ENCODE measurements at regions of chr17 and their contacts with region 1.

Region 1: DNA sequence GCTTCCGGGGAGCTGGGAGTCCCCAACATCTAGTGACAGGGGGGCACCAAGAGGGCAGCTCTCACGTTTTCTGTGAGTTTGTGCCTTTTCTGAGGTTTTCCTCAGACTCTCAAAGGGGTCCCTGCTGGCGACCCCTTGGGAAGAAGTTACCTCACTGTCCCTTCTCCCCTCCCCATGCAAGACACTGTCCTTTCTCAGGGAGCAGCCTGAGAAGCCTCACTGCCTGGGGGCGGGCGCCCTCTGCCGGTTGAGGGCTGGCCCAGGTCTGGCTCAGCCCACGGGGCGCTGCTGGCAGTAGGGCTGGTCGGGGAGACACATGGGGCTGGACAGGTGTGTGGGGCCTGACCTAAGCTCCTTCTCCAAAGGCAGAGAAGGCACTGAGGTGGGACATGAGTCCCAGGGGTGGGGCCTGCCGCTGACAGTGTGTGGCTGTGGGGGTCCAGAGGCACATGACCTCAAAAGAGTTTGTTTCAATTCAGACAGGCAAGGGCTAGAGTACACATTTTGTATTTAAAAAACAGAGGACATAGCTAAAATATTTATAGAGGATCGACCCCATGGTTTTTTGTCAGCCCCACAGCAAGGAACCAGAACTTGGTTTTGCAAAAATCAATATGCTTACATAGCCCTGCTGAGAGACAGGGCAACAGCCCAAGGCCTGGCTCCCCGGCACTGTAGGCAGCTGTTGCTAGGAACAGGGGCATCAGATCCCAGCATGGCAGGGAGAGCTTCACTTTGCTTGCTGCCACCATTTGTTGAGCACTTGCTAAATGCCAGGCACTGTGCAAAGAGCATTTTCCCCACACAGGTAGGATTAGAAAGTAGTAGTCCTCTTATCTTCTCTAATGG is 18.5 kb upstream of the ALDH3A1 start:
- DNase-seq: peak; percentile 87
- CTCF ChIP-seq: peak; percentile 99

Region 2: DNA sequence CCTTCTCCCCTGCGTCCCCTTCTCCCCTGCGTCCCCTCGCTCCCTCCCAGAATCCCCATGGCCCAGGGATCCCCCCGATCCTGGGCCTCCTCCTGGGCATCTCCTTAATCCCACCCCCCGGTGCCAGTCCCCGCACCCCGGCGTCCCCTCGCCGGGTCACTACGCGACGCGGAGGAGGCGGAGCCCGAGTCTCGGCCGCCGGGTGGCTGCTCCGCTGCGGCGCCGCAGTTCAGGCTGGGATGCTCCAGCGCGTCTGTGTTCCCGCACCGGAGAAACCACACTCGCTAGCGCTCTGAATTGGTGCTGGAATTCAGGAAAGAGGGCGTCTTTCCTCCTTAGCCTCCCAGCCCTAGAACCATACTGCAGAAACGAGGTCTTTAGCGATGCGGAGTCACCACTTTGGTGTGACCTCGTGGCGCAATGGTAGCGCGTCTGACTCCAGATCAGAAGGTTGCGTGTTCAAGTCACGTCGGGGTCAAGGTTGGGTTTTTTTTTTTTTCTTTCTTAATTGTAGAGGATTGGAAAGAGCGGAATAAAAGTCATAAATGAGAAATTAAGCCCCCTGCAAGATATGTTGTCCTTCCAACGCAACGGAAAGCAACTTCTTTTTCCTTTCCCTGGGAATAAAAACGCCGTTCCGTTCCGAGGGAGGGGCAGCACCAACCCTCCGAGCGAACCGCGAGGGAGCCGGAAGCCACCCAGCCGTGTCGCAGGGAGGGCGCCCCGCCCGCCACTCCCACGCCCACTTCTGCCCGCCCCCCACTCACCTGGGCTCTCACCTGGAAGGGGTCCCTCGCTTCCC is 258.7 kb before region 1 on chr17:
- CTCF ChIA-PET with region 1: interaction called, 77 read pairs
- POLR2A ChIA-PET with region 1: no interaction called
- DNase-seq: peak; percentile 85
- CTCF ChIP-seq: no peak

Region 3: GRCh38 chr17:19648475-19649406 is 117.9 kb before region 1 on chr17 and contains the start of gene ALDH3A2:
- CTCF ChIA-PET with region 1: interaction called, 23 read pairs
- POLR2A ChIA-PET with region 1: interaction called, 5 read pairs
- DNase-seq: peak; percentile 99
- CTCF ChIP-seq: peak; percentile 30

Region 4: DNA sequence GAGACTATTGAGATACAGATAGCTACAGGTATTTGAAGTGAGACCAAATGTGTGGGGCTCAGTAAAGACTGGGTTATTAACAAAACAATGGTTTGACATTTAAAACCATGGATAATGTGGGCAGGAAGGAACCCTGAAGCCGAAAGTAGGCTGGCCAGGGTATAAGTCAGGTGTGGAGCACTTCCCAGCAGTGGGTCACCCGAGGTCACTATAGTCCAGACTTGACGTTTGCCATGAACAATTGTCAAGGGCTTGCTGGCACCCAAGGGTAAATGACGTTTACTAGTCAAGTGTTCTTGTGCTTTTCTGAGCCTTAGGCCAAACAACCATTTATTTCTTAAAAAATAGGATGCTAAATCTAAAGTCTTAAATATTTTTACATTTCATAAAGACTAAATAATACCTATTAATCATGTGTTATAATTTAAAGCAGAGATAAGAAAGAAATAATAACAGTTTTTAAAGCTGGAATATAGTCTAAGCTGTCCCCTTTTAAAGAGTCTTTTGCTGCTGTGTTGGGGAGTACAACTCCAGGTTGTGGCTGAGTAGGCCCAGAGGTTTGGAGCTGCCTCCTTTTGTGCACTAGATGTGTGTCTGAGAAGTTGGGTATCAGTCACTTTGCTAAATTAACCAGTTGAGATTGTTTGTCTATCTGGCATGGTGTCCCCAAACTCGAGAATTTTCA is 102.4 kb before region 1 on chr17:
- CTCF ChIA-PET with region 1: no interaction called
- POLR2A ChIA-PET with region 1: no interaction called
- DNase-seq: no peak
- CTCF ChIP-seq: no peak

Region 5: GRCh38 chr17:19744922-19745757 is 21.5 kb before region 1 on chr17:
- CTCF ChIA-PET with region 1: interaction called, 162 read pairs
- POLR2A ChIA-PET with region 1: no interaction called
- DNase-seq: peak; percentile 89
- CTCF ChIP-seq: peak; percentile 98

Region 6: GRCh38 chr17:19781488-19782458 is 15.1 kb after region 1 on chr17:
- CTCF ChIA-PET with region 1: interaction called, 34 read pairs
- POLR2A ChIA-PET with region 1: no interaction called
- DNase-seq: no peak
- CTCF ChIP-seq: no peak

Measured in GM10248 (cell line).